H1 (cell line): ENCODE measurements at regions of chr9 and their contacts with region 1.

Region 1: DNA sequence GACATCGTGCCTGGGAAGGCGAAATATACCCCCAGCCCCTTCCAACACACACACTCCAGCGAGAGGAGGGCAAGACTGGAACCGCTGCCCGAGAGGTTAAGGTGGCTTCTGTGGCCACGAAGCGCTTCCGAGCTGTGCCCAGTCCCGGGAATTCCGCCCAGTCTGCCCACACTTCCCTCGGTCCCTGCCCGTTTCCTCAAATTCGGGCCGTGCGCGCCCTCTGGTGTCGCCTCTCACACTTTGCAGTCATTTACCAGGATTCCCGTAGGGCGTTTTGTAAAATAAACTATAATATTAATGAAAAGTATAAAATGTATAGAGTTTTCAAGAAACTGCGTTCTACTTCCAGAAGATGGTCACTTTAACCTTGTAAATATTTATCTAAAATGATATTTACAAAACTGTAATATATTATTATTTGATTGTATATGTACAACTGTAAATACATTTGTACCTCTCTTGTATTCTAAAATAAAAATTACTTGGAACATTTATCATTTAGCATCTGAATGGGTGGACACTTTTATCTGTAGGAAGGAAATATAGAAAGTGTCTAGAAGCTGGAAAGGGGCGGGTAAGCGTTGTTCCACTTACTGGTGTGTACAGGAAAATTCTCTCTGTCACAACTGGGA is 11.0 kb upstream of the EXOSC2 start:
- DNase-seq: peak in 1 of 2 experiments; percentile 88
- H3K4me3 ChIP-seq: peak overlapping the region in 3 of 4 experiments; percentile 58 to 68 (median 64); a peak in 7 of 8 replicates
- H3K27ac ChIP-seq: no peak overlapping the region
- H3K4me1 ChIP-seq: peaks cover 0 to 4% (median under 1%) of the 10 kb centered on the region in 4 experiments; a peak in 2 of 7 replicates
- H3K27me3 ChIP-seq: peaks cover 15 to 39% (median 29%) of the 10 kb centered on the region in 4 experiments
- CTCF ChIP-seq: peak; percentile 66 to 90 (median 75)
- EP300 ChIP-seq: no peak
- POLR2A ChIP-seq: no peak
- RAD21 ChIP-seq: peak; percentile 88 to 92

Region 2: GRCh38 chr9:130461218-130461630 is 221.4 kb before region 1 on chr9:
- CTCF ChIA-PET with region 1: interaction called, 89 read pairs
- POLR2A ChIA-PET with region 1: interaction called, 4 read pairs
- DNase-seq: peak in 1 of 2 experiments; percentile 96
- H3K4me3 ChIP-seq: no peak overlapping the region
- H3K27ac ChIP-seq: no peak overlapping the region
- H3K4me1 ChIP-seq: no peaks in the 10 kb centered on the region; a peak in 2 of 7 replicates
- H3K27me3 ChIP-seq: no peaks in the 10 kb centered on the region
- CTCF ChIP-seq: peak in 2 of 3 experiments; percentile 88 to 96; a peak in 3 of 4 replicates
- EP300 ChIP-seq: no peak
- POLR2A ChIP-seq: no peak
- RAD21 ChIP-seq: peak; percentile 95 to 98

Region 3: DNA sequence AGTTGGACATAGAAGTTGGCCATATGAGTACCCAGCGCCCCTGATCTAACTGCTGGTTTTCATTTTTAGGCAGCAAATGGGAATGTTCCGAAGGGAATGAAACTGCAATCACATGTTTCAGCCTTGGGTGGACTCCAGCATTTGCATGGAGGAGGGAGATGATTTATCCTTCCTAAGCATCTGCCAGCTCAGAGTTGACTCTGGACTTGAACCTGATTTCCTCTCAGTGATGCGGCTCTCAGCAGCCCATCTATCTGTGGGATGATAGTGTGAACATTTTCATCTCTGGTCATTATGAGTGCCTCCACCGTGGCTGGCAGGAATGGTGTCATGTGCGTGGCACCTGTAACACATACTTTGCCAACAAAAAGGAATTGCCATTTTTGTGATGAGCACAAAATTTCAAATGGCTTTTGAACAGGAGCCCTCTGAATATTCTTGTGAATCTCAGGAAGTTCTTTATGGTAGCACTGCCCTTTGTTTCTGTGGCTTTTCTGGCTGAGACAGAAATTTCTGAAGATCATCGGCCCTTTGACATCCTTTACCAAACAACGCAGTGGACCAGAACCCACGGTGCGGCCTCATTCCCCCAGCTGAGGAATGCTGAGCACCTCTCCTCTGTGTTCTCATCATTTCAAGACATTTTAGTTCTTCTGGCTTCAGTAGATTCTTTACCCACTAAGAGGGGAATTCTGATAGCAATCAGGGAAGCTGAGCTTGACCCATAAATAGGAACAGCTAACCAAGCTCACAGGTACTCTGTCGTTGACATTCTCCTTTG is 74.8 kb before region 1 on chr9:
- CTCF ChIA-PET with region 1: interaction called, 10 read pairs
- POLR2A ChIA-PET with region 1: no interaction called
- DNase-seq: no peak
- H3K4me3 ChIP-seq: no peak overlapping the region
- H3K27ac ChIP-seq: no peak overlapping the region
- H3K4me1 ChIP-seq: no peaks in the 10 kb centered on the region; a peak in 1 of 7 replicates
- H3K27me3 ChIP-seq: no peaks in the 10 kb centered on the region
- CTCF ChIP-seq: no peak
- EP300 ChIP-seq: no peak
- POLR2A ChIP-seq: no peak
- RAD21 ChIP-seq: no peak

Region 4: DNA sequence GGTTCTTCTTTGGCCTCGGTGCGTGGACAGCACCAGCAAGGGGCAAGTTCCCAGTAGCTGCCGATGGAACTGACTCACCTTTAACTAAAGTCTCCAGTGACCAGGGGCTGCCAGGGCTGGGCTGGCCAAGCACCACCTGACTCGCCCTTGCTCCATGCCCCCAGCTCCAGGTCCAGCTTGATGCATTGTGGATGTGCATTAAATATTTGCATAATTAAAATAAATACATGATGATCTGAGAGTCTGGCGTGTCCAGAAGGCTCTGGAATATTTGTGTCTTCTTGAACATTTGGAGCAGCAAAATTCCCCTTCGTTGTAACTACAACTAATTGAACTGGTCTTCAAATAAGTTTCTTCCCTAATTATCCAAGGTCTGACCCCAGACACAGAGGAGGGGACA is 27.7 kb before region 1 on chr9:
- CTCF ChIA-PET with region 1: interaction called, 42 read pairs
- POLR2A ChIA-PET with region 1: interaction called, 3 read pairs
- DNase-seq: no peak
- H3K4me3 ChIP-seq: no peak overlapping the region
- H3K27ac ChIP-seq: no peak overlapping the region
- H3K4me1 ChIP-seq: no peaks in the 10 kb centered on the region; a peak in 1 of 7 replicates
- H3K27me3 ChIP-seq: peaks cover 25 to 48% (median 41%) of the 10 kb centered on the region in 4 experiments
- CTCF ChIP-seq: no peak
- EP300 ChIP-seq: no peak
- POLR2A ChIP-seq: no peak
- RAD21 ChIP-seq: no peak

Region 5: GRCh38 chr9:130672466-130672865 is 10.1 kb before region 1 on chr9:
- CTCF ChIA-PET with region 1: interaction called, 53 read pairs
- POLR2A ChIA-PET with region 1: interaction called, 8 read pairs
- DNase-seq: no peak
- H3K4me3 ChIP-seq: no peak overlapping the region
- H3K27ac ChIP-seq: no peak overlapping the region
- H3K4me1 ChIP-seq: no peaks in the 10 kb centered on the region; a peak in 1 of 7 replicates
- H3K27me3 ChIP-seq: peaks cover 15 to 29% (median 23%) of the 10 kb centered on the region in 4 experiments
- CTCF ChIP-seq: no peak
- EP300 ChIP-seq: no peak
- POLR2A ChIP-seq: no peak
- RAD21 ChIP-seq: no peak

Region 6: DNA sequence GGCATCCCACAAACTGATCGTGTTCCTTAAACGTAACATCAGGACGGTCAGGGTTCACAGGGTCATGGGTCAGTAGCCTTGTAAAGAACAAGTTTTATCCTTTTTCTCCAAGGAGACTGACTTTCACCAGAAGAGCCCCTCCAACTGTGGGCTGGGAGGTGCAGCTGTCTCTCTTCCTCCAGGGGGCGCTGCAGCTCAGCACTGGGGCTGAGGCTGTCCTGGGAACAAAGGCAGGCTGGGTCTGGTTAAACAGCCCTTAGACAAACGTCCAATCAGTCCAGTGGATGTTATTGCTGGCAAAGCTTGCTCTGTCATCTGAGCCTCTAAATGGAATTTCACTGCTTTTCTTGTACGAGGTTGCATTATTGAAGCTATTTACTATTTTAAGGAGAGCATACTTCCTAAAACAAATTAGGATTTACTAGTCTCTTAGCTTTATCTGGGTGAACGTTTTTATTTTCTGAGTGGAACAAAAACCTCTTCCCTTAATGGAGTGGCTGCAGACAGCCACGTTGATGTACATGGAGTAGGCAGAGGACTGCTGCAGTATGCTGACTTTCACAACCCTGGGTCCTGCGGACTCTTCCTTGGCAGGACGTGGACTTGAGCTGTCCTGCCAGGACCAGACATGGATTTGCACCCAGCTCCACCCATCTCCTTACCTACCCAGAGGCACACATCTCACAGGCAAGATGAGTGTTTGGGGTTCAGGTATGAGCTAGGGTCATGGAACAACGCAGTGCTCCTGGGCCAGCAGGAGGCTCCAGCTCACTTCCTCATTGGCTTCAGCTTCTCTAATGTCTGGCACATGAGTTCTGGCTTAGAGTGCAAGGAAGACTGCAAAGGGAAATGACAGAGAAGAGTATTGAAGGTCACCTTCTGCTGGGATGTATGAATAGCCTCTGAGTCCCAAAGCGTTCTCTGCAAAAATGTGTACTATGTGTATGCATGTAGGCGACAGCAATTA is 18.7 kb after region 1 on chr9:
- CTCF ChIA-PET with region 1: interaction called, 10 read pairs
- POLR2A ChIA-PET with region 1: interaction called, 4 read pairs
- DNase-seq: peak in 1 of 2 experiments; percentile 93
- H3K4me3 ChIP-seq: no peak overlapping the region
- H3K27ac ChIP-seq: 0 out of 2 replicates have a peak overlapping the region, but pooled peaks have one; percentile 2
- H3K4me1 ChIP-seq: no peaks in the 10 kb centered on the region; a peak in 1 of 7 replicates
- H3K27me3 ChIP-seq: no peaks in the 10 kb centered on the region
- CTCF ChIP-seq: peak; percentile 87 to 98 (median 97)
- EP300 ChIP-seq: no peak
- POLR2A ChIP-seq: no peak
- RAD21 ChIP-seq: peak; percentile 75 to 79